ENCODE measurements at regions of chr22 and their contacts with region 1.

Region 1: GRCh38 chr22:37045958-37046357 is 5.6 kb upstream of the KCTD17 start:
- DNase-seq: no peak
- H3K4me3 ChIP-seq: no peak overlapping the region
- H3K27ac ChIP-seq: no peak overlapping the region
- H3K27me3 ChIP-seq: no peaks in the 10 kb centered on the region
- CTCF ChIP-seq: peak in 54 of 56 donors; percentile 26 to 65 (median 42)

Region 2: GRCh38 chr22:36493690-36494110 is 552.3 kb before region 1 on chr22:
- intact Hi-C with region 1: no loop called
- DNase-seq: peak in 2 of 10 donors; percentile 40 to 52
- H3K4me3 ChIP-seq: no peak overlapping the region
- H3K27ac ChIP-seq: no peak overlapping the region
- H3K27me3 ChIP-seq: no peaks in the 10 kb centered on the region
- CTCF ChIP-seq: no peak

Region 3: DNA sequence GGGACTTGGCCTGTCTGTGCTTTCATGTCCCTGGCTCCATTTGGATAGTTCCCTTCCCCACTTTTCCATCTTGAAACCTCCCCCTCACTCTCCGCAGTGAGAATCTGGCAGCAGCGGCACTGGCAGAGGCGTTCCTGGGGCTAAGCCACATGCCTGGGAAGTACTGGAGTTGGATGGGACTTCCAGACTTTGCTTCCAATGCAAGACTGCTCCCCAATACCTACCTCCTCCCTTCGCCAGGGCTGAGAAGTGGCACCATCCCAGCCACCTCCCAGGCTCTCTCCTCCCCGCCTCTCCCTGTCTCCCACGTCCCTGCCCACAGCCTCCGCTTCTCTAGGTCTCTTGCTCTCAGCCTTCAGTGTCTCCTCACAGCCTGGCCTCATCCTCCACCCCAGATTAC is 43.3 kb before region 1 on chr22:
- intact Hi-C with region 1: loop called in 1 of 2 experiments (anchors 5 kb)
- DNase-seq: peak in 6 of 10 donors; percentile 27 to 69 (median 64)
- H3K4me3 ChIP-seq: no peak overlapping the region
- H3K27ac ChIP-seq: peak overlapping the region in 2 of 59 donors; percentile 5 to 11
- H3K27me3 ChIP-seq: no peaks in the 10 kb centered on the region
- CTCF ChIP-seq: no peak

Measured in dorsolateral prefrontal cortex (tissue), 120 donors.